Activated CD4-positive, alpha-beta T cell treated with anti-CD3 and anti-CD28 coated beads for 36 hours (primary cell): ENCODE measurements at regions of chr5 and their contacts with region 1.

Region 1: DNA sequence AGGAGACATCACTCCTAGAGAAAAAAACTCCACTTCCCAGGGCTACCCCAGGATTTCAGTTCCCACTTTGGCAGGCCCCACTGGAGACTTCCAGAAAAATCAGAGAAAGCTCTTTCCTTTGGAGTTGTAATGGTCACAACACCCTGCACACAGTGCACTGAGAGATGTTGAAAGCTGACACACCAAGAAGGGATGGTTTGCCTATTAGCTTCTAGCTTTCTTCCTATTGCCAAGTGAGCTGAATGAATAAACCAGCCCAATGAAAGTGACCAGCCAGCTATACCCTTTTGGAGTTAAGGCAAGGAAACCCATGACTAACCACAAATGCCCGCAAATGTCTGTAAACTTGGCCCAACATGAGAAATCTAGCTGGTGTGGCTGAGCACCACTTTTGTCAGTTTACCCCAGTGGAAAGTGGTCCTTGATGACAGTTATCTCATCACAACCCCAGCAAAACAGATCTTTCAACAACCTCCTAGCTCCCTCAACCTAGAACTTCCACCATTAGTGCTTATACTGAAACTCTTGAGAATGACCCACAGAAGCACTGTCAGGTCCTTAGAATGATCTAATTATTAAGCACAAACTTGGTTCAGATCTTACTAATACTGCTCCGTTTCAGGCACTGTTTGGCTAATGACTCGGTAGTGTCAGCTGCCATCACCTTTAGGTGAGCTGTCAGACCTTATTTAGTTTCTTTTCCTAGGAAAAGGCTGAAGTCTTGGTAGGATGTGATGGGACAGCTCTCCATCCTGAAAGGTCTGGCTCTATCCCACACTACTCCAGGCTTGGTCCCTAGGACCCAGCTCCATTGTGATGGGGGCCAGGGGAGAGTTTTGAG is 11.2 kb downstream of the IRF1 start:
- DNase-seq: no peak
- ATAC-seq: peak; percentile 31
- H3K4me3 Mint-ChIP-seq: no peak overlapping the region
- H3K27ac Mint-ChIP-seq: peak overlapping the region; percentile 65
- H3K4me1 Mint-ChIP-seq: peaks cover 53% of the 10 kb centered on the region
- H3K27me3 Mint-ChIP-seq: no peaks in the 10 kb centered on the region

Region 2: DNA sequence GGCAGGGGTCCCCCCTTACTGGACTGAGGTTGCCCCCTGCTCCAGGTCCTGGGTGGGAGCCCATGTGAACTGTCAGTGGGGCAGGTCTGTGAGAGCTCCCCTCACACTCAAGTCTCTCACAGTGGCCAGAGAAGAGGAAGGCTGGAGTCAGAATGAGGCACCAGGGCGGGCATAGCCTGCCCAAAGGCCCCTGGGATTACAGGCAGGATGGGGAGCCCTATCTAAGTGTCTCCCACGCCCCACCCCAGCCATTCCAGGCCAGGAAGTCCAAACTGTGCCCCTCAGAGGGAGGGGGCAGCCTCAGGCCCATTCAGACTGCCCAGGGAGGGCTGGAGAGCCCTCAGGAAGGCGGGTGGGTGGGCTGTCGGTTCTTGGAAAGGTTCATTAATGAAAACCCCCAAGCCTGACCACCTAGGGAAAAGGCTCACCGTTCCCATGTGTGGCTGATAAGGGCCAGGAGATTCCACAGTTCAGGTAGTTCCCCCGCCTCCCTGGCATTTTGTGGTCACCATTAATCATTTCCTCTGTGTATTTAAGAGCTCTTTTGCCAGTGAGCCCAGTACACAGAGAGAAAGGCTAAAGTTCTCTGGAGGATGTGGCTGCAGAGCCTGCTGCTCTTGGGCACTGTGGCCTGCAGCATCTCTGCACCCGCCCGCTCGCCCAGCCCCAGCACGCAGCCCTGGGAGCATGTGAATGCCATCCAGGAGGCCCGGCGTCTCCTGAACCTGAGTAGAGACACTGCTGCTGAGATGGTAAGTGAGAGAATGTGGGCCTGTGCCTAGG is 405.9 kb before region 1 on chr5 and contains the start of gene CSF2:
- CTCF ChIA-PET with region 1: no interaction called
- POLR2A ChIA-PET with region 1: no interaction called
- intact Hi-C with region 1: no loop called
- DNase-seq: peak; percentile 46
- ATAC-seq: peak; percentile 28
- H3K4me3 Mint-ChIP-seq: peak within 1 kb of the TSS; percentile 61
- H3K27ac Mint-ChIP-seq: peak within 1 kb of the TSS; percentile 33
- H3K4me1 Mint-ChIP-seq: peaks cover 43% of the 10 kb centered on the region
- H3K27me3 Mint-ChIP-seq: no peaks in the 10 kb centered on the region
- total RNA-seq, gene CSF2: 52.6 to 59.5 TPM

Region 3: DNA sequence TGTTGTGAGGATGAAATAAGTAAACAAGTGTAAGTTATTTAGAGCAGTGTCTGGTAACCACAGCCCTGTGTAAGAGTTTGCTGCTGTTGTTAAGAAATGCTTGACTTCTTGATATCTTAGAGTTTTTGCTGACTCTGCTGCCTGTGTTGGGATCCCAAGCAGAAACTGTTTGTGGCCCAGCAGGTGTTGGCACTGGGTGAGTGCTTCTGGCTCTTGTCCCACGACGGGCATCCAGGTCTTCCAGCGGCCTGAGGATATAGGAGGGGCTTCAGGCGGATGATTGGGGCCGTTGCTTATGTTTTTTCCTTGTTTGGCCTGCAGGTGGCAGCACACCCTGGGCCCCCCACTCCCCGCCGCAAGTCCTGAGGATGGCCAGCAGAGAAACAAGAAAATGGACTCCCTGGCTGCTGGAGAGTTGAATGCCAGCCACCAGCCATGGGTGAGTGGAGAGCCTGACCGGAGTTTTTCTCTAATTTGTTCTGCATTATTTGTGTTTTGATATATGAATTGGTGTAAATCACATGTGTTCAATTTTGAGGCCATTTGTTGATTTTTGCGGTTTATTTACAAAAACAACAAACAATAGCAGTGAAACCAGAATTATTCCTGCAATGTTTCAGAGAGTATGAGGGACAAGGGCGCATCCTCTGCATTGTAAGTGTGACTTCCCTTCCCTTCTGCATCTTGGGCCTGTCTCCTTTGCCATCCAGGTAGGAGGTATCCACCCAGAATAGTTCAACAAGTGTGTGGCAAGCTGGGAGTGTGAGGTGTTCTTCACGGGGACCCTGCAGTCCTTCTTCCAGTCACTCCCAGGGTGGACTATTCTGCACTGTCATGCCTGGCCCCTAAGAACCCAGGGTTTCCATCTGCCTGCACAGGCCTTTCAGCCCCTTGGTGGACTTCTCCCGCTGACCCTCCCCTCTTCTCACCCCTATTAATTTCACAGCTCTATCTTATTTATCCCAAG is 59.5 kb before region 1 on chr5:
- CTCF ChIA-PET with region 1: interaction called, 15 read pairs
- POLR2A ChIA-PET with region 1: interaction called, 130 read pairs
- intact Hi-C with region 1: no loop called
- DNase-seq: peak; percentile 75
- ATAC-seq: peak; percentile 65
- H3K4me3 Mint-ChIP-seq: peak overlapping the region; percentile 37
- H3K27ac Mint-ChIP-seq: peak overlapping the region; percentile 90
- H3K4me1 Mint-ChIP-seq: peaks cover 83% of the 10 kb centered on the region
- H3K27me3 Mint-ChIP-seq: no peaks in the 10 kb centered on the region

Region 4: GRCh38 chr5:132466433-132467286 is 12.7 kb before region 1 on chr5:
- CTCF ChIA-PET with region 1: interaction called, 16 read pairs
- POLR2A ChIA-PET with region 1: interaction called, 91 read pairs
- intact Hi-C with region 1: no loop called
- DNase-seq: peak; percentile 78
- ATAC-seq: peak; percentile 61
- H3K4me3 Mint-ChIP-seq: peak overlapping the region; percentile 51
- H3K27ac Mint-ChIP-seq: peak overlapping the region; percentile 51
- H3K4me1 Mint-ChIP-seq: peaks cover 88% of the 10 kb centered on the region
- H3K27me3 Mint-ChIP-seq: no peaks in the 10 kb centered on the region